ENCODE measurements at regions of chr6 and their contacts with region 1.

Region 1: GRCh38 chr6:136723780-136724179 is 68.5 kb downstream of the MAP3K5 start:
- DNase-seq: peak; percentile 80
- H3K4me3 ChIP-seq: no peak overlapping the region
- H3K27ac ChIP-seq: peak overlapping the region; percentile 58
- H3K4me1 ChIP-seq: peaks cover 51% of the 10 kb centered on the region
- CTCF ChIP-seq: no peak

Region 2: GRCh38 chr6:136643850-136644596 is 79.8 kb before region 1 on chr6:
- CTCF ChIA-PET with region 1: interaction called, 9 read pairs
- POLR2A ChIA-PET with region 1: interaction called, 31 read pairs
- intact Hi-C with region 1: no loop called
- DNase-seq: peak; percentile 81
- H3K4me3 ChIP-seq: no peak overlapping the region
- H3K27ac ChIP-seq: no peak overlapping the region
- H3K4me1 ChIP-seq: peaks cover 17% of the 10 kb centered on the region
- CTCF ChIP-seq: peak; percentile 99

Region 3: GRCh38 chr6:136710877-136711552 is 12.8 kb before region 1 on chr6:
- CTCF ChIA-PET with region 1: no interaction called
- POLR2A ChIA-PET with region 1: interaction called, 10 read pairs
- intact Hi-C with region 1: no loop called
- DNase-seq: no peak
- H3K4me3 ChIP-seq: no peak overlapping the region
- H3K27ac ChIP-seq: no peak overlapping the region
- H3K4me1 ChIP-seq: peaks cover 2% of the 10 kb centered on the region
- CTCF ChIP-seq: no peak

Region 4: GRCh38 chr6:136740050-136740974 is 16.5 kb after region 1 on chr6:
- CTCF ChIA-PET with region 1: interaction called, 4 read pairs
- POLR2A ChIA-PET with region 1: interaction called, 13 read pairs
- intact Hi-C with region 1: no loop called
- DNase-seq: no peak
- H3K4me3 ChIP-seq: no peak overlapping the region
- H3K27ac ChIP-seq: no peak overlapping the region
- H3K4me1 ChIP-seq: peaks cover 26% of the 10 kb centered on the region
- CTCF ChIP-seq: no peak

Region 5: DNA sequence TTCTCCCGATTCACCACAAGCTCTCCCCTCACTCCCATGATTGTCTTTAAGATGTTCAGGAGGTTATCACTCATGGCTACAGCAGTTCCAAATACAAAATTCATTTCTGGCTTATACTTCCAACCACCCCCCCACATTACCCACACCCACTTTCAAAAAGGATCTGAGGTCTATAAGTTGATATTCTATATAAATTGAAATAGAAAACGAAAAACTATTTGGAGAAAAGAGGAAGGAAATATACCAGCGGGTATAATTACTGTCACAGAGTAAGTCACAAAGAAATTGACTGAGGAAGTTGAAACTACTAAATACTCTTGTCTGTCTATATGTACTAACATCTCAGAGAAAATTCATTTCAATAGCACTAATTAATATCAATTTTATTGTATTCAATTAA is 1030.6 kb after region 1 on chr6:
- CTCF ChIA-PET with region 1: no interaction called
- POLR2A ChIA-PET with region 1: no interaction called
- intact Hi-C with region 1: loop called (anchors 10 kb)
- DNase-seq: peak; percentile 57
- H3K4me3 ChIP-seq: peak overlapping the region; percentile 38
- H3K27ac ChIP-seq: peak overlapping the region; percentile 71
- H3K4me1 ChIP-seq: peaks cover 29% of the 10 kb centered on the region
- CTCF ChIP-seq: no peak

Measured in OCI-LY7 (cell line).